CD8-positive, alpha-beta T cell (primary cell): ENCODE measurements at regions of chr11 and their contacts with region 1.

Region 1: GRCh38 chr11:103601225-103601846 is 435.1 kb upstream of the DDI1 start:
- DNase-seq: peak in 2 of 9 experiments; percentile 25 to 39
- ATAC-seq: peak; percentile 38
- H3K4me3 ChIP-seq: no peak overlapping the region
- H3K4me3 Mint-ChIP-seq: no peak overlapping the region
- H3K27ac ChIP-seq: no peak overlapping the region
- H3K27ac Mint-ChIP-seq: no peak overlapping the region
- H3K4me1 ChIP-seq: no peaks in the 10 kb centered on the region
- H3K4me1 Mint-ChIP-seq: no peaks in the 10 kb centered on the region
- H3K27me3 ChIP-seq: no peaks in the 10 kb centered on the region
- H3K27me3 Mint-ChIP-seq: peaks cover 9% of the 10 kb centered on the region
- CTCF ChIP-seq: peak; percentile 52

Region 2: DNA sequence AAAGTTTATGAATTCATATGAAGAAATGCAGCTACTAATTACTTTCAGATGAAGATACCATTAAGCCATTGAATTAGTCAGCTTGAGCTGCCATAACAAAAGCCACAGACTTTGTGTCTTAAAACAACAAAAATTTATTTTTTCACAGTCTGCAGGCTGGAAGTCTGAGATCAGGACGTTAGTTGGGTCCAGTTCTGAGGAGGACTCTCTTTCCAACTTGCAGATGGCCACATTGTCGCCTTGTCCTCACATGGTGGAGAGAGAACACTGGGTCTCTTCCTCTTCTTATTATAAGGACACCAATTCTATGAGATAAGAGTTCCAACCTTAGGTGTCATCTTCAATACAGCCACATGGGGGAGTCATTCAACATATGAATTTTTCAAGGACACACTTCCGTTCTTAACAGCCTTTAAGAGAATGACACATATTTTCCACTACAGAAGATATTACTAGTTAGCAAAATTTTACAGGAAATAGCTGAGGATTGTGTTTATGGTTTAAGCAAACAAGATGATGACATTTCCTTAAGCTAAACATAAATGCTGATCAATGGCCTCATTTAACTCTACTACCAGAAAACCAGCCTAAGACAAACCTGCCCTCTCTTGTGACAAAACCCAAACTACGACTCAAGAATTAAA is 565.4 kb before region 1 on chr11:
- CTCF ChIA-PET with region 1: interaction called, 6 read pairs
- POLR2A ChIA-PET with region 1: no interaction called
- intact Hi-C with region 1: loop called in 1 of 2 experiments (anchors 5 kb)
- DNase-seq: peak in 6 of 9 experiments; percentile 10 to 80 (median 30)
- ATAC-seq: peak; percentile 93
- H3K4me3 ChIP-seq: no peak overlapping the region
- H3K4me3 Mint-ChIP-seq: no peak overlapping the region
- H3K27ac ChIP-seq: peak overlapping the region in 1 of 2 experiments; percentile 23
- H3K27ac Mint-ChIP-seq: peak overlapping the region; percentile 20
- H3K4me1 ChIP-seq: peaks cover 3% of the 10 kb centered on the region
- H3K4me1 Mint-ChIP-seq: peaks cover 6% of the 10 kb centered on the region
- H3K27me3 ChIP-seq: no peaks in the 10 kb centered on the region
- H3K27me3 Mint-ChIP-seq: no peaks in the 10 kb centered on the region
- CTCF ChIP-seq: peak; percentile 75

Region 3: GRCh38 chr11:103202048-103202651 is 399.2 kb before region 1 on chr11:
- CTCF ChIA-PET with region 1: no interaction called
- POLR2A ChIA-PET with region 1: no interaction called
- intact Hi-C with region 1: loop called in 1 of 2 experiments (anchors 5 kb)
- DNase-seq: peak in 2 of 9 experiments; percentile 1 to 17
- ATAC-seq: no peak
- H3K4me3 ChIP-seq: no peak overlapping the region
- H3K4me3 Mint-ChIP-seq: no peak overlapping the region
- H3K27ac ChIP-seq: no peak overlapping the region
- H3K27ac Mint-ChIP-seq: no peak overlapping the region
- H3K4me1 ChIP-seq: no peaks in the 10 kb centered on the region
- H3K4me1 Mint-ChIP-seq: no peaks in the 10 kb centered on the region
- H3K27me3 ChIP-seq: no peaks in the 10 kb centered on the region
- H3K27me3 Mint-ChIP-seq: no peaks in the 10 kb centered on the region
- CTCF ChIP-seq: no peak

Region 4: DNA sequence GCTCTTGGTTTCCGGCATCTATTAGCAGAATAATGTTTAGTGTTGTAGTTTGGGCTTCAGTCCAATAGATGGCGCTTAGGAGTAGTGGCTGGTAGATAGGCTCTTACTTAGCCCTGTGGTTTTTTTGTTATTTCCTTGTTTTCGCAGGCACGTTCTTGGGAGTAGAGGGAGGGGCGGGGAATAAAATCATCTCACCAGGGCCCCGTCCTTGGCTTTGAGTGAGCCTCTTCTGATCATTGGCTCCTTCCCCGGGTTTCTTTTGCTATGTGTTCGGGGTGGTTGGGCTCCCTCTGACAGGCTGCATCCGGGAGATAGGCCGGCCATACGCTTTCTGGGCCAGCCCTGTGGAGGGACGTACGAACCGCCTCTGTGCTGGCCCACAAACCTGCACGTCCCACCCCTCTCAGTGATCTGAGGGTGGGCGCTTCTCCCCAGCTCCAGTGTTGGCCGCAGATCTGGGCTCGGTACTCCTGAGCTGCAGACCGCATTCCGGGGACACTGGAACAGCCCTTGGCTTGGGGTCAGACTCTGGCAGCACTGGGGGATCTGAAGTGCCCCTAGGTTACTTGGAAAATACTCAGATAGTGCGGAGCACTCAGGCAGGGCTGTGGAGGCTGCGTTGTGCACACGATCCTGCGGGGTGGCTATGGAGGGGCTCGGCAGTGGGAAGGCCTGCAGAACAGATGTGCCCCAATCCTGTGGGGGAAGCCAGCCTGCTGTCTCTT is 275.1 kb before region 1 on chr11:
- CTCF ChIA-PET with region 1: no interaction called
- POLR2A ChIA-PET with region 1: no interaction called
- intact Hi-C with region 1: loop called in 1 of 2 experiments (anchors 10 kb)
- DNase-seq: peak in 3 of 9 experiments; percentile 18 to 67 (median 62)
- ATAC-seq: peak; percentile 86
- H3K4me3 ChIP-seq: no peak overlapping the region
- H3K4me3 Mint-ChIP-seq: no peak overlapping the region
- H3K27ac ChIP-seq: no peak overlapping the region
- H3K27ac Mint-ChIP-seq: no peak overlapping the region
- H3K4me1 ChIP-seq: peaks cover 3% of the 10 kb centered on the region
- H3K4me1 Mint-ChIP-seq: peaks cover 4% of the 10 kb centered on the region
- H3K27me3 ChIP-seq: no peaks in the 10 kb centered on the region
- H3K27me3 Mint-ChIP-seq: no peaks in the 10 kb centered on the region
- CTCF ChIP-seq: peak; percentile 50